Mammary epithelial cell (primary cell): ENCODE measurements at regions of chr22 and their contacts with region 1.

Region 1: GRCh38 chr22:34430386-34430785 is 510.1 kb upstream of the LARGE1 start:
- DNase-seq: peak; percentile 84
- H3K4me3 ChIP-seq: no peak overlapping the region
- H3K27ac ChIP-seq: no peak overlapping the region
- H3K4me1 ChIP-seq: peaks cover 5% of the 10 kb centered on the region
- H3K27me3 ChIP-seq: no peaks in the 10 kb centered on the region
- CTCF ChIP-seq: no peak

Region 2: GRCh38 chr22:34225278-34225677 is 205.1 kb before region 1 on chr22:
- CTCF ChIA-PET with region 1: no interaction called
- dilution Hi-C with region 1: no loop called
- in situ Hi-C with region 1: no loop called
- intact Hi-C with region 1: no loop called
- DNase-seq: no peak
- H3K4me3 ChIP-seq: no peak overlapping the region
- H3K27ac ChIP-seq: no peak overlapping the region
- H3K4me1 ChIP-seq: no peaks in the 10 kb centered on the region
- H3K27me3 ChIP-seq: no peaks in the 10 kb centered on the region
- CTCF ChIP-seq: no peak

Region 3: DNA sequence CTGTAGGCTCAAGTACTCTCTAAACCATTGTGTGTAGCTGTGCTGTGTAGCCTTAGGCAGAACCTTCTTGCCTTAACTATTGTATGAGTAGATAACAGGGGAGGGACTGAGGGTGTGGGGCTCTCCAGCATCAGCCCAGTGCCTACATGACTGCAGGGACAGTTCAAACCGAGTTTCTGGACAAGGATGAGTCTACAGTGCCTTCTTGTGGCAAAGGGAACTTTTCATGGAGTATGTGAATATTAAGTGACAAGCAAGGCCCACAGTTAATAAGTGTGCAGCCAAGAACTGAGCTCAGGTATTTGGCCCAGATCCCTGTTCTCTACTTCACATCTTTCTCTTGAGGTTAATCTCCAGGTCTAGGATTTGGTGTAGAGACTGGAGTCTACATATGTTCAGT is 85.7 kb before region 1 on chr22:
- CTCF ChIA-PET with region 1: no interaction called
- dilution Hi-C with region 1: loop called (anchors 5 kb)
- in situ Hi-C with region 1: no loop called
- intact Hi-C with region 1: no loop called
- DNase-seq: no peak
- H3K4me3 ChIP-seq: no peak overlapping the region
- H3K27ac ChIP-seq: no peak overlapping the region
- H3K4me1 ChIP-seq: no peaks in the 10 kb centered on the region
- H3K27me3 ChIP-seq: no peaks in the 10 kb centered on the region
- CTCF ChIP-seq: no peak

Region 4: DNA sequence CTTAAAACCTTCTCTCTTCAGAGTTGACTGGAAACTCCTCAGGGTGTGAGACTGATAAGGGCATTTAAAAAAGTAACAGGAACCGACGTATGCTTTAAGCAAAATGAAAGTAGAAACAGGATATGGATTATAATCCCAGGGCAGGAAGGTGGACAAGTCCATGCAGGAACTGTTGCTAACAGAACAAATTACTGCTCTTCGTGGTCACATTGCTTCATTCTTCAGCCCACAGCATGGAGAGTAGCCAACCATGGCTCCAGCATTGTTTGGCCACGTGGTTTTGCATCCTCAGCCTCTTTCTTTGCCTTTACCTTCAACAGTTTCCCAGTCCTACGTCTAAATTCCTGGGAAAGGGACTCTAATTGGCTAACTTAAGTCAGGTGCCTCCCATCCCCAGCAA is 72.4 kb after region 1 on chr22:
- CTCF ChIA-PET with region 1: no interaction called
- dilution Hi-C with region 1: no loop called
- in situ Hi-C with region 1: no loop called
- intact Hi-C with region 1: loop called (anchors 2 kb)
- DNase-seq: peak; percentile 85
- H3K4me3 ChIP-seq: no peak overlapping the region
- H3K27ac ChIP-seq: no peak overlapping the region
- H3K4me1 ChIP-seq: no peaks in the 10 kb centered on the region
- H3K27me3 ChIP-seq: no peaks in the 10 kb centered on the region
- CTCF ChIP-seq: no peak